MCF 10A (cell line): ENCODE measurements at regions of chr1 and their contacts with region 1.

Region 1: GRCh38 chr1:205321164-205321958 is at the start of gene NUAK2:
- DNase-seq: peak; percentile 97
- H3K4me3 Mint-ChIP-seq: peak within 1 kb of the TSS; percentile 99
- H3K27ac Mint-ChIP-seq: peak within 1 kb of the TSS; percentile 54
- H3K4me1 Mint-ChIP-seq: peaks cover 56% of the 10 kb centered on the region
- H3K27me3 Mint-ChIP-seq: no peaks in the 10 kb centered on the region
- CTCF ChIP-seq: peak; percentile 64
- total RNA-seq, gene NUAK2: 2.8 and 6.0 TPM in 2 replicates

Region 2: DNA sequence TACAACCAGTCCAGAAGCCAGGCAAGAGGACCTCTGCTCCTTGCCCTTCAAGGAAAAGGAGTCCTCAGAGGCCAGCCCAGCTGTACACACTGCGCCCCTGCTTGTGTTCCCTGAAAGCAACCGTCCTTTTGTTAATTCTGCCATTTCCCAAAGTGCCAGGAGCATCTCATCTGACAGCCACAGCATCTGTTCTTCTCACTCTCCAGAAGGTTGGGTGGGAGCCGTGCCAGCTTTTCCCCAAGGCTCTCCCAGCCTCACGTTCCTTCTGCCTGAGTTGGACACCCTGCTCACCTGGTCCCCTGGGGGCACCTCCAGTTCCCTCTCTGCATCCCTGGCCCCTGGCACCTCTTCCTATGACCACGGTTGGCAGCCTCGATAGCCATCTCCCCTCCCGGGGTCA is 288.9 kb before region 1 on chr1:
- CTCF ChIA-PET with region 1: no interaction called
- POLR2A ChIA-PET with region 1: no interaction called
- intact Hi-C with region 1: no loop called
- DNase-seq: no peak
- H3K4me3 Mint-ChIP-seq: no peak overlapping the region
- H3K27ac Mint-ChIP-seq: no peak overlapping the region
- H3K4me1 Mint-ChIP-seq: no peaks in the 10 kb centered on the region
- H3K27me3 Mint-ChIP-seq: peaks cover 85% of the 10 kb centered on the region
- CTCF ChIP-seq: no peak

Region 3: GRCh38 chr1:205273551-205273982 is 47.8 kb before region 1 on chr1:
- CTCF ChIA-PET with region 1: interaction called, 1,857 read pairs
- POLR2A ChIA-PET with region 1: interaction called, 210 read pairs
- intact Hi-C with region 1: loop called (anchors 1 kb)
- DNase-seq: peak; percentile 93
- H3K4me3 Mint-ChIP-seq: no peak overlapping the region
- H3K27ac Mint-ChIP-seq: no peak overlapping the region
- H3K4me1 Mint-ChIP-seq: peaks cover 27% of the 10 kb centered on the region
- H3K27me3 Mint-ChIP-seq: peaks cover 9% of the 10 kb centered on the region
- CTCF ChIP-seq: peak; percentile 100

Region 4: DNA sequence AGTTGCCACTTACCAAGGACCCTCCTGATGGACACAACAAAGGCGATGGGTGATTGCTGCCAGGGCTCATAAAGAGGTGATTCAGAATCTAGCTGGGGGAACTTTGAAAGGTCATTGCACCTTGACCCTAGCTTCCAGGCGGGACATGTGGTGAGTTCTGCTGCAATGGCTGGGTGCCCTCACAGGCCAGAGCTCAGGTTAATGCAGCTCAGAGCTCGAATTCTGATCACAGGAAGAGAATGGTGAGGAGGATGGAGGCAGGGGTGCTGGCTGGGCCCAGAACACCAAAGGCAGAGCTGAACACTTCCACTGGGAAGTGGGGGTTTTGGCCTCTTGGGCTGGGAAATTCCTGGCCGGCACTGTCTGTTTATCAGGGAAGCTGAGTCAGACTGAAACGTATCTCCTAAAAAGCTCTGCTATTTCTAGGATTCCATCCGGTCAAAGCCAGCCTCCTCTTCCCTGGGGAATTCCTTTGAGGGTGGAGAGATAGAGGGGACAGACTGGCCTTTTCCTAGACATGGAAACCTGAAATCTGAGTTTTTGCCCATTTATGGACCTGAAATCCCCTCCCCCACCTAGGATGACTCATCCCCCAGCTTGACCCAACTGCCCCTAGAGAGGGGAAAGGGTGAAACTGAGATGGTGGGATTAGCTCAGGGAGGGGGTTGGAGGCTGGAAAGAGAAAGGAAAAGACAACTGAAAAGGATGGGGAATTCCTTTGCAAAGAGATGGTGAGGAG is 27.0 kb before region 1 on chr1:
- CTCF ChIA-PET with region 1: interaction called, 1,857 read pairs
- POLR2A ChIA-PET with region 1: interaction called, 335 read pairs
- intact Hi-C with region 1: loop called (anchors 2 kb)
- DNase-seq: peak; percentile 97
- H3K4me3 Mint-ChIP-seq: no peak overlapping the region
- H3K27ac Mint-ChIP-seq: peak overlapping the region; percentile 77
- H3K4me1 Mint-ChIP-seq: peaks cover 55% of the 10 kb centered on the region
- H3K27me3 Mint-ChIP-seq: no peaks in the 10 kb centered on the region
- CTCF ChIP-seq: no peak

Region 5: DNA sequence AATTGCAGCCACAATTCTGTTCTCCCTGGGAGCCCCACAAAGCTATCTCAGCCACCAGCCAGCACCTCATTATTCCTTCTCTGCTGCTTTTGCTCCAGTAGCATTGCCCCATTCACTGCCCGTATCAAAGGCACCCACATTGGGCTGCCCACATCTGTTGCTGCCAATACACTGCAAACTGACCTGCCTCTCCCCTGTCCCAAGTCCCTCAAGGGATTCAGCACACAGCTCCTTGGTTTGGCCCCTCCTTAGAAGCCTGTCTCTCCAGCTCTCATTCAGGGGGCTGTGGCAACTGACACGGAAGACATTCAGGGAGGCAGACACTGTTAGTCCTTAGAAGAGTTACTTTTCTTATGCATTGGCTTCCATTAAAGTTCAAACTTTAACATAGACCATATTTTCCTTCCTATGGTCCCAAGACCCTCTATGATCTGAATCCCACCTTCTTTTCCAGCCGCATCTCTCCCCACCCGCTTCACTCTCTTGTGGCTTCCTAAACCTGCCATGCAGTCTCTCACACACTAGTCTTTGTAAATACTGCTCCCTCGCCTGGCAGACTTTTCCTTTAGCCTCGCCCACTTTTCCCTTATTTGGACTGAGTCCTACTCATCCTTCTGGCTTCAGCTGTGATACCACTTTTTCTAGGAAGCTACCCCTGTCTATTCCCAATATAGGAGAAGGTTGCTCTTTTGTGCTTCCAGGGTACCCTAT is 54.6 kb after region 1 on chr1:
- CTCF ChIA-PET with region 1: interaction called, 13 read pairs
- POLR2A ChIA-PET with region 1: no interaction called
- intact Hi-C with region 1: no loop called
- DNase-seq: peak; percentile 90
- H3K4me3 Mint-ChIP-seq: no peak overlapping the region
- H3K27ac Mint-ChIP-seq: no peak overlapping the region
- H3K4me1 Mint-ChIP-seq: peaks cover 36% of the 10 kb centered on the region
- H3K27me3 Mint-ChIP-seq: no peaks in the 10 kb centered on the region
- CTCF ChIP-seq: no peak